CD4-positive, alpha-beta memory T cell (primary cell): ENCODE measurements at regions of chr1 and their contacts with region 1.

Region 1: GRCh38 chr1:77978969-77979876 is at the start of gene FUBP1:
- DNase-seq: peak; percentile 95 to 98 (median 97)
- H3K4me3 ChIP-seq: peak within 1 kb of the TSS; percentile 74 to 94
- H3K4me3 Mint-ChIP-seq: no peak within 1 kb of the TSS
- H3K27ac ChIP-seq: peak within 1 kb of the TSS; percentile 100
- H3K27ac Mint-ChIP-seq: no peak within 1 kb of the TSS
- H3K4me1 ChIP-seq: peaks cover 55% of the 10 kb centered on the region
- H3K4me1 Mint-ChIP-seq: peaks cover 22 to 39% (median 30%) of the 10 kb centered on the region in 4 donors
- H3K27me3 ChIP-seq: no peaks in the 10 kb centered on the region
- H3K27me3 Mint-ChIP-seq: no peaks in the 10 kb centered on the region
- total RNA-seq, gene FUBP1: 246 to 270 TPM

Region 2: DNA sequence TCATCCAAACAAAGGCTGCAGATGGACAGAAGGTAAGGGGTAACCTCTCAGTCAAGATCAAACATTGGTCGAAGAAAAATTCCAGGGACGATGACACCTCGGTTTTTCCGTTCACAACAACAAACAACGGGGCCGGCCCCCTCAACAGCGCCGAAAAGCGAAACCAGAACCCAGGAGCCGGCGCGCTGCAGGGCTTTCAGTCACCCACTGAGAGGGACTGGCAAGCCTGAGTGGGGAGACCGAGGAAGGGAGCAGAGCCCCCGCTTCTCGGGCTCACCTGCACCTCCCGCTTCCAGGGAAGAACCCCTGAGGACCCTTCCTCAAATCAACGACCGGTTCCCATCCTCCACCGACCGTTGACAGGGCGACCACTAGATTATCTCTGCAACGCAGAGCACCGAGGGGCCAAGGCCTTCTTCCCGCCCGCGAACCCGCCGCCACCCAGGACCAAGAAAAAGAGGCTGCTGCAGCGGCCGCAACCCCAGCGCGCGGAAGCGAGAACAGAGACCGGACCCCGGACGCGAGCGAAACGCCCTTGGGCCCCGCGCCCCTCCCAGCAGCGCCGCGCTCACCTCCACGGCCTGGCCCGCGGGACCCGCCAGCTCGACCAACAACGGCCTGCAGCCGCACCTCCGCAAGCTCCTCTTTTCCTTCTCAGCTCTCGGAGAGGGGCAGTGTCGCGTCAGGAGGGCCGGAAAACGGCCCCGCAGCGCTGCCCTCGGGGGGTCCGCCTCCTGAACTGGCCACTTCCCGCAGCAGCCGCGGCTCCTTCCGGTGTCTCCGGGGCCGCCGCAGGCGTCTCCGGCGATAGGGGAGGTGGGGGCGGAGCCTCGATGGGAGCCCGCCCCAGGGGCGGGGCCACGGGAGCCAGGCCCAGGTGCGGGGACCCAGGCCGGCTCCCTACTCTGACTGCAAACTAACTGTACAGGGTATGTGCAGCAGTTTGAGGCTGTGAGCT is 219.9 kb before region 1 on chr1 and contains the start of gene USP33:
- CTCF ChIA-PET with region 1: no interaction called
- POLR2A ChIA-PET with region 1: interaction called, 8 read pairs
- intact Hi-C with region 1: loop called (anchors 1 kb)
- DNase-seq: peak; percentile 89 to 93 (median 90)
- H3K4me3 ChIP-seq: peak within 1 kb of the TSS; percentile 55 to 76
- H3K4me3 Mint-ChIP-seq: peak within 1 kb of the TSS; percentile 90 to 97 (median 95)
- H3K27ac ChIP-seq: peak within 1 kb of the TSS; percentile 85
- H3K27ac Mint-ChIP-seq: peak within 1 kb of the TSS; percentile 92 to 97 (median 93)
- H3K4me1 ChIP-seq: peaks cover 48% of the 10 kb centered on the region
- H3K4me1 Mint-ChIP-seq: peaks cover 32 to 51% (median 39%) of the 10 kb centered on the region in 4 donors
- H3K27me3 ChIP-seq: no peaks in the 10 kb centered on the region
- H3K27me3 Mint-ChIP-seq: no peaks in the 10 kb centered on the region
- total RNA-seq, gene USP33: 87.4 to 89.1 TPM

Region 3: DNA sequence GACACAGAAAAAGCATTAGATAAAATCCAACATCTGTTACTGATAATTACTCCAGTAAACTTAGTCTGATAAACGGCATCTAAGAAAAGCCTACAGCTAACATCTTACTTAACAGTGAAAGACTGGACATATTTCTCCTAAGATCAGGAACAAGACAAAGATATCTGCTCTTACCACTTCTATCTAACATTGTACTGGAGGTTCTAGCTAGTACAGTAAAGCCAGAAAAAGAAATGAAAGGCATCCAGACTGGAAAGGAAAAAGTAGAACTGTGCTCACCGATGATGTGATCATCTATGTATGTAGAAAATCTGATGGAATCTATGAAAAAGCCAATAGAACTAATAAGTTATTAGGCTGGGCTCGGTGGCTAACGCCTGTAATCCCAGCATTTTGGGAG is 69.1 kb before region 1 on chr1:
- CTCF ChIA-PET with region 1: no interaction called
- POLR2A ChIA-PET with region 1: no interaction called
- intact Hi-C with region 1: no loop called
- DNase-seq: no peak
- H3K4me3 ChIP-seq: no peak overlapping the region
- H3K4me3 Mint-ChIP-seq: no peak overlapping the region
- H3K27ac ChIP-seq: no peak overlapping the region
- H3K27ac Mint-ChIP-seq: no peak overlapping the region
- H3K4me1 ChIP-seq: no peaks in the 10 kb centered on the region
- H3K4me1 Mint-ChIP-seq: peaks cover 0 to 1% (median 0%) of the 10 kb centered on the region in 4 donors
- H3K27me3 ChIP-seq: no peaks in the 10 kb centered on the region
- H3K27me3 Mint-ChIP-seq: no peaks in the 10 kb centered on the region

Region 4: GRCh38 chr1:77961392-77961791 is 17.8 kb before region 1 on chr1:
- CTCF ChIA-PET with region 1: interaction called, 6 read pairs
- POLR2A ChIA-PET with region 1: interaction called, 9 read pairs
- intact Hi-C with region 1: loop called (anchors 2 kb)
- DNase-seq: no peak
- H3K4me3 ChIP-seq: no peak overlapping the region
- H3K4me3 Mint-ChIP-seq: no peak overlapping the region
- H3K27ac ChIP-seq: no peak overlapping the region
- H3K27ac Mint-ChIP-seq: peak overlapping the region in 2 of 7 donors; percentile 19 to 29
- H3K4me1 ChIP-seq: no peaks in the 10 kb centered on the region
- H3K4me1 Mint-ChIP-seq: peaks cover 16 to 27% (median 25%) of the 10 kb centered on the region in 4 donors
- H3K27me3 ChIP-seq: no peaks in the 10 kb centered on the region
- H3K27me3 Mint-ChIP-seq: no peaks in the 10 kb centered on the region

Region 5: GRCh38 chr1:78004719-78005447 is 25.7 kb after region 1 on chr1 and contains the start of gene DNAJB4:
- CTCF ChIA-PET with region 1: interaction called, 38 read pairs
- POLR2A ChIA-PET with region 1: interaction called, 247 read pairs
- intact Hi-C with region 1: loop called (anchors 1 kb)
- DNase-seq: peak; percentile 80 to 90 (median 89)
- H3K4me3 ChIP-seq: peak within 1 kb of the TSS; percentile 73 to 85
- H3K4me3 Mint-ChIP-seq: peak within 1 kb of the TSS; percentile 78 to 95 (median 90)
- H3K27ac ChIP-seq: peak within 1 kb of the TSS; percentile 72
- H3K27ac Mint-ChIP-seq: peak within 1 kb of the TSS; percentile 96 to 99 (median 98)
- H3K4me1 ChIP-seq: peaks cover 31% of the 10 kb centered on the region
- H3K4me1 Mint-ChIP-seq: peaks cover 16 to 48% (median 26%) of the 10 kb centered on the region in 4 donors
- H3K27me3 ChIP-seq: no peaks in the 10 kb centered on the region
- H3K27me3 Mint-ChIP-seq: no peaks in the 10 kb centered on the region
- total RNA-seq, gene DNAJB4: 15.5 to 18.3 TPM

Region 6: DNA sequence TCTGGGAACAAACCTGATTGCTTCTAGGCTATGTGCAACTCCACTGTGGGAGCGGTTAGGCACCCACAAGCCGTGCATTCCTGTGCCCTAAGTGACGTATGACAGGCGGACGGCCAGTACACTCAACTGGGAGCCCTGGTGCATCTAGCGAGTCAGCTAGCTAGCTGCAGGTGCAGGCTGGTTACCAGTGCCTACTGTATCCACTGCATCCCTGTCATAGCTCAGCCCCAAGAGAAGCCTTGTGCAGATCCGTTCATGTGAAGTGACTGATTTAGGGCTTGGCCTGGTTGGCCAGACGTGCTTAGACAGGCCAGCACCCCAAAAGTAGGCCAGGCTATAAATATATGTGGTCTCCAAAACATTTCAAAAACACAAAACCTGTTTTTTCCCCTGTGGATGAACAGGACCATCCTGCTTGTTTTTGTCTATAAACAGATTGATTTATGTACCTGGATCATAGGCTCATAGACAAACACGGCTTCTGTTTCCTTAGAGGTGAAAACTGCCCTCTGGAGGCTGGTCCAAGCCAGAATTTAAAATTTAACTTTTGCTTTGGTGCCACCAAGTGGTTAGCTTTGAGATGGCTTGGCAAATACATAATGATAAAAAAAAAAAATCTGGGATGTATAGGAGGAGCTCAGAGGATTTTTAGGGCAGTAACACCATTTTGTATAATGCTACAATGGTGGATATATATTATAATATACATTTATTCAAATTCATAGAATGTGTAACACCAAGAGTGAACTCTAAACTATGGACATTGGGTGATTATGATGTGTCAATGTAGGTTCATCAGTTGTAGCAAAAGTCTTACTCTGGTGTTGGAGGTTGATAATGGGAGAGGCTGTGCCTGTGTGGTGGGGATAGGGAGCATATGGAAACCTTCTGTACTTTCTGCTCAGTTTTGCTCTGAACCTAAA is 135.1 kb after region 1 on chr1:
- CTCF ChIA-PET with region 1: interaction called, 11 read pairs
- POLR2A ChIA-PET with region 1: interaction called, 8 read pairs
- intact Hi-C with region 1: loop called (anchors 1 kb)
- DNase-seq: peak; percentile 52 to 70 (median 61)
- H3K4me3 ChIP-seq: no peak overlapping the region
- H3K4me3 Mint-ChIP-seq: no peak overlapping the region
- H3K27ac ChIP-seq: no peak overlapping the region
- H3K27ac Mint-ChIP-seq: peak overlapping the region in 1 of 7 donors; percentile 7
- H3K4me1 ChIP-seq: no peaks in the 10 kb centered on the region
- H3K4me1 Mint-ChIP-seq: no peaks in the 10 kb centered on the region
- H3K27me3 ChIP-seq: no peaks in the 10 kb centered on the region
- H3K27me3 Mint-ChIP-seq: no peaks in the 10 kb centered on the region